HEK293 (cell line): ENCODE measurements at regions of chr1 and their contacts with region 1.

Region 1: GRCh38 chr1:86470859-86471258 is 2.1 kb downstream of the CLCA1 start:
- H3K4me3 ChIP-seq: no peak overlapping the region
- H3K27ac ChIP-seq: no peak overlapping the region
- H3K4me1 ChIP-seq: no peaks in the 10 kb centered on the region
- CTCF ChIP-seq: no peak

Region 2: DNA sequence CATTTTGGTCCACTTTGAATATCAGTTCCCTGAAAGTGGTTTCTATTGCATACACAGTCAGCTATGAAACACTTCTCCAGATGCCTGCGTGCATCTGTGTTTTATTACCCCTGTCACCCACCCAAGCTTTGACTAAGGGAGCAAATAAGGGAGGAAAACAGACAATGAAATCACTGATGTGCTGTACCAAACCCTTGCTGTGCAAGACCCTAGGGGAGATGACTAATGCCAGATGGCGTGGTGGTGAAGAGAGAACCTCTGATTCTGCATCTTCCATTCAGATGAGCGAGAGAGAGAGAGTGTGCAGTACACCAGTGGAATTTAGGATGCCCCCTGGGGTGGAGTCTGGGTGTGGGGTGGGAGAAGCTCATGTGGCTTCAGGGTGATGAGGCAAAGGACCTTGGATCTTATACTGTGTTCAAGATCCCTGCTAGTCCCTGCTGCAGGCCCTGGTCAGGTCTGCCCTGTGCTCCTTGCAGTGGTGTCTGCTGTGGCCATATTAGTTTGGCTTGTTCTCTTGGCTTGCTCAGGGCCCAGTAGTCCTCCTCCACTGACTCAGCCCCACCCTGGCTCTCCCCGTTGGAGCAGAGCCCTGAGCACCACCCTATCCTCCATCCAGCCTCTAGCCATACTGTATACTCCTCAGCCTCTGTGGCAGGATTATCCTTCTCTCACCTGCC is 16.4 kb after region 1 on chr1:
- CTCF ChIA-PET with region 1: interaction called, 13 read pairs
- POLR2A ChIA-PET with region 1: no interaction called
- H3K4me3 ChIP-seq: no peak overlapping the region
- H3K27ac ChIP-seq: no peak overlapping the region
- H3K4me1 ChIP-seq: no peaks in the 10 kb centered on the region
- CTCF ChIP-seq: no peak

Region 3: GRCh38 chr1:86507935-86508582 is 37.2 kb after region 1 on chr1:
- CTCF ChIA-PET with region 1: interaction called, 19 read pairs
- POLR2A ChIA-PET with region 1: no interaction called
- H3K4me3 ChIP-seq: no peak overlapping the region
- H3K27ac ChIP-seq: no peak overlapping the region
- H3K4me1 ChIP-seq: no peaks in the 10 kb centered on the region
- CTCF ChIP-seq: no peak

Region 4: GRCh38 chr1:86704458-86704971 is 233.7 kb after region 1 on chr1 and contains the start of gene SH3GLB1:
- CTCF ChIA-PET with region 1: interaction called, 10 read pairs
- POLR2A ChIA-PET with region 1: no interaction called
- H3K4me3 ChIP-seq: peak within 1 kb of the TSS; percentile 91
- H3K27ac ChIP-seq: peak within 1 kb of the TSS; percentile 98
- H3K4me1 ChIP-seq: peaks cover 4% of the 10 kb centered on the region; the same call in 1 of the 2 replicates
- CTCF ChIP-seq: peak; percentile 96